Calu3 (cell line): ENCODE measurements at regions of chr3 and their contacts with region 1.

Region 1: GRCh38 chr3:187139126-187139894 is at the start of gene RPL39L:
- DNase-seq: peak; percentile 96
- H3K4me3 Mint-ChIP-seq: peak within 1 kb of the TSS; percentile 84
- H3K27ac Mint-ChIP-seq: peak within 1 kb of the TSS; percentile 69
- H3K4me1 Mint-ChIP-seq: no peaks in the 10 kb centered on the region
- H3K27me3 Mint-ChIP-seq: no peaks in the 10 kb centered on the region
- CTCF ChIP-seq: peak; percentile 99
- total RNA-seq, gene RPL39L: 27.2 and 31.8 TPM in 2 replicates

Region 2: DNA sequence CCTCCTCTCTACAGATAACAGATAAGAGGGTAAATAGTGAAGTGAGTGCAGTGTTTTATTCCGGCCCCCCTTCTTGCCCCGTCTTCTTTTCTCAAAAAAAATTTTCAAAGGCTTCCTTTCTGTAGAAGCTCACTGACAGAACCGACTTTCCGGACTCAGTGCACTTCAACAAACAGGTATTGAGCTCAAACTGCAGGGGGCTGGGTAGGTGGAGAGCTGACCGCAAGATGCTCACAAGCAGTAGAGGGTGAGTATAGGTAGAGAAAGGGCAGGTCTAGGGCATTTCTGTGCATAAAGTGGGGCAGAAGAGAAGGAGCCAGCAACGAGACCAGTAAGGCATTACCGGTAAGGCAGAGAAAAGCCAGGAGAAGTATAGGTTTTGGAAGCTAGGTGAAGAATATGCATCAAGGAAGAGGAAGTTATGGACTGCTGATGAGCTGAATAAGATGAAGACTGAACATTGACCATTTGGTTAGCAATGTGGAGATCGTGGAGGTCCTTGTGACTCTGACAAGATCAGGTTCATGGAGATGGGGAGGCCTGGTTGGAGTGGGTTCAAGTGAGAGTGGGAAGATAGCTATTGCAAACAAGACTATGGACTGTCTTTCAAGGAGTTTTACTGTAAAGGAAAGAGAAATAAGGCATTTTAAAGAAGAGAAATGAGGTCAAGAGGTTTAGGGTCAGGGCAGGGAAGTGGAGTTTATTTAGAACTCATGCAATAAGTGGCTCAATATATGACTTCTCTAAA is 111.6 kb before region 1 on chr3:
- CTCF ChIA-PET with region 1: no interaction called
- intact Hi-C with region 1: no loop called
- DNase-seq: no peak
- H3K4me3 Mint-ChIP-seq: no peak overlapping the region
- H3K27ac Mint-ChIP-seq: no peak overlapping the region
- H3K4me1 Mint-ChIP-seq: no peaks in the 10 kb centered on the region
- H3K27me3 Mint-ChIP-seq: no peaks in the 10 kb centered on the region
- CTCF ChIP-seq: no peak

Region 3: GRCh38 chr3:187101184-187102072 is 37.9 kb before region 1 on chr3:
- CTCF ChIA-PET with region 1: interaction called, 10 read pairs
- intact Hi-C with region 1: no loop called
- DNase-seq: peak; percentile 72
- H3K4me3 Mint-ChIP-seq: peak overlapping the region; percentile 19
- H3K27ac Mint-ChIP-seq: no peak overlapping the region
- H3K4me1 Mint-ChIP-seq: peaks cover 19% of the 10 kb centered on the region
- H3K27me3 Mint-ChIP-seq: no peaks in the 10 kb centered on the region
- CTCF ChIP-seq: no peak

Region 4: DNA sequence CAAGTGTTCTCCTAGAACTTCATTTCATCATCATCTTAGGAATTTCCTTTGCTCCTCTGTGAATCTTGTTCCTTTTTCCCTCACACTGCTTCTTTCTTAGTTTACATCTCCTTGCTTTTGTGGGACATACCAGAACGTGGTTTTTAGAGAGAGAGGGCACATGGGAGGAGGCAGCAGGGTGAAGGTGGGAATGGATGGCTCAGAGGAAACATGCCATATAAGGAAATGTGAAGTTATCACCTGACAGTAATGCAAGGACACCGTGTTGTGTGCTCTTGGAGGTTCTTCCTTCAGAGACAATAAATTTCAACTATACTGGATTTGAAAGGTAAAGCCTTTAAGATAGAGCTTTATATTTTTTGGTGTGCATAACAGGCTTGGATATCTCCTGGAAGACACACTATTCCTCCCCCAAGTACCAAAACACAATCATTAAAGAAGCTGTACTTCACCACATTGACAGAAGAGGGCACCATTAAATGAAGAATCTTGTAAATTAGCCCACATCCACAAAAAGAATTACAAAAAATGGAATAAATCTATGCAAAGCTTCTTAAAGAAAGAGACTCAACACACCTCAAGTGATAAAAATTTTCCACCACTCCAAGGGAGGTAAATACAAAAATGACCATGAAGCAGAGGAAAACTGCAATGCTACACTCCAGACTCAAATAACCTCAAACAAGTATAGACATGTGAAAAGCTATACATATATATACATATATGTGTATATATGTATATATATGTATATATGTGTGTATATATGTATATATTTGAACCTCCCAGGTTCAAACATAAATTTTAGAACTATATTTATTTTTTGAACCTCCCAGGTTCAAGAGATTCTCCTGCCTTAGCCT is 26.1 kb before region 1 on chr3:
- CTCF ChIA-PET with region 1: interaction called, 18 read pairs
- intact Hi-C with region 1: no loop called
- DNase-seq: peak; percentile 24
- H3K4me3 Mint-ChIP-seq: no peak overlapping the region
- H3K27ac Mint-ChIP-seq: no peak overlapping the region
- H3K4me1 Mint-ChIP-seq: peaks cover 12% of the 10 kb centered on the region
- H3K27me3 Mint-ChIP-seq: no peaks in the 10 kb centered on the region
- CTCF ChIP-seq: peak; percentile 59

Region 5: DNA sequence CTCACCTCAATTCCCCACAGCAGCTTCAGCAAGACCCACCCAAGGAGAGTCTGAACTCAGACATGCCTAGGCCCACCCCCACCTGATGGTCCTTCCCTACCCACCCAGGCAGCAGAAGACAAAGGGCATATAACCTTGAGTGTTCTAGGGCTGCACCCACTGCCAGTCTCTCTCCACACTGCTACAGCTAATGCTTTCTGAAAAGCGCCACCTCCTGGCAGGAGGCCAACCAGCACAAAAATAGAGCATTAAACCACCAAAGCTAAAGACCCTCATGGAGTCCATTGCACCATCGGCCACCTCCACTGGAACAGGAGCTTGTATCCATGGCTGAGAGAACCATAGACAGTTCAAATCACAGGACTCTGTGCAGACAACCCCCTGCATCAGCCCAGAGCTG is 11.3 kb after region 1 on chr3:
- CTCF ChIA-PET with region 1: interaction called, 12 read pairs
- intact Hi-C with region 1: no loop called
- DNase-seq: peak; percentile 48
- H3K4me3 Mint-ChIP-seq: no peak overlapping the region
- H3K27ac Mint-ChIP-seq: no peak overlapping the region
- H3K4me1 Mint-ChIP-seq: no peaks in the 10 kb centered on the region
- H3K27me3 Mint-ChIP-seq: peaks cover 45% of the 10 kb centered on the region
- CTCF ChIP-seq: peak; percentile 17

Region 6: DNA sequence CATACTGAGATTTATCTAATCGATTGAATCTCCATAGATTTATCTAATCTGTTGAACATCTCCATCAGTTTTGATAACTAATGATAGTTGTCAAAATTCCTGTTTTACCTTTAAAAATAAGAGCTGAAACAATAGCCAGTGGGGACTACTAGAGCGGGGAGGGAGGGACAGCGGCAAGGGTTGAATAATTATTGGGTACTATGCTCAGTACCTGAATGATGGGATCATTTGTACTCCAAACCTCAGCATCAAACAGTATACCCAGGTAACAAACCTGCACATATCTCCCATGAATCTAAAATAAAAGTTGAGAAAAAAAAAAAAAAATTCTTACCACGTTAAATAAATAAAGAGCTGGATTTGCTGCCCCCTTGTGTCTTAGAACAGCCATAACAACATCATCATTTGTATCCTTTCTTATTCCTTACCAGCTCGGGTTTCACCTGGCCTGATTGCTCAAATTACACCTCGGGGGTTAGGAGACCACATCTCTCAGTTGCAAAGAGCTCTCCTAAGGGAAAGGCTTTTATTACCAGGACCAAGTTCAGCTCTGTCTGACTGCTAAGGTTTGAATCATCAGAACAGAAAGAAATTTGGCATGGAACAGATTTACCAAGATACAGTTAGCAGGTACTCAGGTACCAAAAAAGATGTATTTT is 25.7 kb after region 1 on chr3:
- CTCF ChIA-PET with region 1: interaction called, 32 read pairs
- intact Hi-C with region 1: loop called (anchors 2 kb)
- DNase-seq: peak; percentile 65
- H3K4me3 Mint-ChIP-seq: no peak overlapping the region
- H3K27ac Mint-ChIP-seq: no peak overlapping the region
- H3K4me1 Mint-ChIP-seq: peaks cover 23% of the 10 kb centered on the region
- H3K27me3 Mint-ChIP-seq: peaks cover 26% of the 10 kb centered on the region
- CTCF ChIP-seq: peak; percentile 65

Region 7: GRCh38 chr3:187186801-187187421 is 47.6 kb after region 1 on chr3:
- CTCF ChIA-PET with region 1: interaction called, 6 read pairs
- intact Hi-C with region 1: loop called (anchors 1 kb)
- DNase-seq: peak; percentile 86
- H3K4me3 Mint-ChIP-seq: peak overlapping the region; percentile 9
- H3K27ac Mint-ChIP-seq: peak overlapping the region; percentile 76
- H3K4me1 Mint-ChIP-seq: peaks cover 51% of the 10 kb centered on the region
- H3K27me3 Mint-ChIP-seq: no peaks in the 10 kb centered on the region
- CTCF ChIP-seq: no peak

Region 8: GRCh38 chr3:187610981-187611511 is 471.7 kb after region 1 on chr3:
- CTCF ChIA-PET with region 1: no interaction called
- intact Hi-C with region 1: no loop called
- DNase-seq: no peak
- H3K4me3 Mint-ChIP-seq: no peak overlapping the region
- H3K27ac Mint-ChIP-seq: no peak overlapping the region
- H3K4me1 Mint-ChIP-seq: no peaks in the 10 kb centered on the region
- H3K27me3 Mint-ChIP-seq: peaks cover 52% of the 10 kb centered on the region
- CTCF ChIP-seq: no peak